CD8-positive, alpha-beta T cell (primary cell): ENCODE measurements at regions of chr6 and their contacts with region 1.

Region 1: DNA sequence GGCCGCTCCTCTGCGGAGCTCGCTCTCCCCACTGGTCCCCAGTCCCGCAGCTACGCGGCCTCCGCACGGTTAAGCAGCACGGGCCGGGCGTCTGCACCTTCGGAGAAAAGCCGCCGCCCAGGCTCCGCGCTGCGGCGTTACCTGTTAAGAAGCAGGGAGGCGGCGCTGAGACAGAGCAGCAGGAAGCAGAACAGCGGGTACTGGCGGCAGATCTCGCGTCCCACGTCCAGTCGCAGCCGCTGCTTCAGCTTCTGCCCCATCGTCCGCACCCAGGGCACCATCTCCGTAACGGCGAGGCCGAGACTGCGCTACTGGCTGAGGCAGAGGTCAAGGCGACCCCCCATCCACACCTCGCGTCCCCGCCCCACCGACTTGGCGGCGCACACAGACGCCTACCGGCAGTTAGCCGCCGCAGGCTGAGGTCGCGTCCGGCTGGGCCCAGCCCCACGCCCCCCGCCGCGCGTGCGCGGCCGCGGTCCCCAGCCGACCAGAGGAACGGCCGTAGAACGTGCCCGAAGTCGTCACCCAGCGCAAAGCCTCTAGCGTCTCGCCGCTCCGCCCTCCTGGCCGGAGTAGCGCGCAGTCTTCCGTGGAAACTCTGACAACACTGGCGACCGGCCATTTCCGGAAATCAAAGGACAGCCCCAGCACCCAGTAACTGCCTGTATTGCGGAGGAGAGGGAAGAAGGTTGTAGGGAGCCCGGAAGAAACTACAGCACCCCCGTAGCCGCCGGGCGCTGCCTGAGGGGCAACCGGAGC is at the start of gene SNX14:
- DNase-seq: peak; percentile 59 to 90 (median 76)
- ATAC-seq: peak; percentile 78
- H3K4me3 ChIP-seq: peak within 1 kb of the TSS; percentile 90 to 95
- H3K4me3 Mint-ChIP-seq: peak within 1 kb of the TSS; percentile 97
- H3K27ac ChIP-seq: peak within 1 kb of the TSS; percentile 84 to 88
- H3K27ac Mint-ChIP-seq: peak within 1 kb of the TSS; percentile 98
- H3K4me1 ChIP-seq: peaks cover 20% of the 10 kb centered on the region
- H3K4me1 Mint-ChIP-seq: peaks cover 53% of the 10 kb centered on the region
- H3K27me3 ChIP-seq: no peaks in the 10 kb centered on the region
- H3K27me3 Mint-ChIP-seq: no peaks in the 10 kb centered on the region
- CTCF ChIP-seq: no peak
- total RNA-seq, gene SNX14: 34.2 to 38.1 TPM

Region 2: DNA sequence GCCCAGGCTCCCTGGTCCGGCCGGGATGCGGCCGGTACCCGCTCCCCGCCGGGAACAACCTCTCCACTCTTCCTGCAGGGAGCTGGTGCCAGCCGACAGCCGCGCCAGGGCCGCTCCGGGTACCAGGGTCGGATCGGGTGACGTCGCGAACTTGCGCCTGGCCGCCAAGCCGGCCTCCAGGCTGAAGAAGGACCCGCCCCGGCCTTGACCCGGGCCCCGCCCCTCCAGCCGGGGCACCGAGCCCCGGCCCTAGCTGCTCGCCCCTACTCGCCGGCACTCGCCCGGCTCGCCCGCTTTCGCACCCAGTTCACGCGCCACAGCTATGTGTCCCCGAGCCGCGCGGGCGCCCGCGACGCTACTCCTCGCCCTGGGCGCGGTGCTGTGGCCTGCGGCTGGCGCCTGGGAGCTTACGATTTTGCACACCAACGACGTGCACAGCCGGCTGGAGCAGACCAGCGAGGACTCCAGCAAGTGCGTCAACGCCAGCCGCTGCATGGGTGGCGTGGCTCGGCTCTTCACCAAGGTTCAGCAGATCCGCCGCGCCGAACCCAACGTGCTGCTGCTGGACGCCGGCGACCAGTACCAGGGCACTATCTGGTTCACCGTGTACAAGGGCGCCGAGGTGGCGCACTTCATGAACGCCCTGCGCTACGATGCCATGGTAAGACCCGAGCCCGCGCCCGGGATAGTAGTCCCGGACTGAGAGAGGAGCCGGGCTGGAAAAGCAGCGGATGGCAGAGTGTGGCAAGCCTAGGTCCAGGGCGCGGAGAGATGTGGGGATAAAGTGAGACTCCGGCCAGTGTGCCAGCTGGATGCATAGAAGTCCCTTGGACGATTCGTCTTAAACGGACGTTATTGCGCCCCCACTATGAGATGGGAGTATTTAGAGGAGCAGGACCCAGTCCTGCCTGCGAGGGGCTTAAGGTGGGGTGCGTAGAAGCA is 143.5 kb before region 1 on chr6 and contains the start of gene NT5E:
- CTCF ChIA-PET with region 1: no interaction called
- POLR2A ChIA-PET with region 1: interaction called, 16 read pairs
- intact Hi-C with region 1: no loop called
- DNase-seq: peak; percentile 19 to 78 (median 61)
- ATAC-seq: peak; percentile 58
- H3K4me3 ChIP-seq: peak within 1 kb of the TSS; percentile 64 to 65
- H3K4me3 Mint-ChIP-seq: peak within 1 kb of the TSS; percentile 98
- H3K27ac ChIP-seq: peak within 1 kb of the TSS; percentile 40 to 71
- H3K27ac Mint-ChIP-seq: peak within 1 kb of the TSS; percentile 97
- H3K4me1 ChIP-seq: peaks cover 44% of the 10 kb centered on the region
- H3K4me1 Mint-ChIP-seq: peaks cover 62% of the 10 kb centered on the region
- H3K27me3 ChIP-seq: peaks cover 0 to 6% of the 10 kb centered on the region in 2 experiments
- H3K27me3 Mint-ChIP-seq: no peaks in the 10 kb centered on the region
- CTCF ChIP-seq: no peak
- total RNA-seq, gene NT5E: 12.7 to 13.0 TPM

Region 3: DNA sequence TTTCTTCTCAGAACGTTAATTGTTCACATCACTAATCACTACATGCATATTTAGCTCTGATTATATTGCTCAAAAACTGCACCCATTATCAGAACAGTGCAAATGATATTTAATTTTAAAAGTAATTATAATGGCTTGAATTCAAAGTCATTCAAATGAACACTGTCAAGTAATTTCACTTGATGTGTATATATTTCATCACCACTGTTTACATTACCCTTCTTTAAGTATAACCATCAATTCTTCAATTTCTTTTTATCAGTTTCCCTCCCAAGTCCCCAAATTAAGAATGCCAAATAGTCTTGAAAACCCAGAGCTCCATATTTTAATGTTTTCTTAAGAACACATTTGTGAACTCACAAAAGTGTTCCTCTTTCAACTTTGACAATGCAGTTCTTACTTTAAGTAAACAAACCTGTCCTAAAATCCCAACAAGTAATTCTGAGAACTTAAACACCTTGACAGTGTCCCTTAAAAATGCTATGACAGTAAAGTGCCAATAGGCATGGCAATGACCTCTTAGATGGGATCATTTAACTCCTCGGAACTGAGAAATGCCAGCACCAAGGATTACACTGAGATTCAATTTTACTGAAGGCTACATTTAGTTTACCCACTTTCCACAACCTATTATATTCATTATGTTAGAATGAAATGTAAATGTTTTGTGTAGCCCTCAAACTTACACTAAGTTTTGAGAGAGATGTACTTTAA is 16.7 kb after region 1 on chr6:
- CTCF ChIA-PET with region 1: interaction called, 3 read pairs
- POLR2A ChIA-PET with region 1: interaction called, 4 read pairs
- intact Hi-C with region 1: loop called in 1 of 2 experiments (anchors 1 kb)
- DNase-seq: no peak
- ATAC-seq: no peak
- H3K4me3 ChIP-seq: no peak overlapping the region
- H3K4me3 Mint-ChIP-seq: no peak overlapping the region
- H3K27ac ChIP-seq: no peak overlapping the region
- H3K27ac Mint-ChIP-seq: no peak overlapping the region
- H3K4me1 ChIP-seq: peaks cover 4% of the 10 kb centered on the region
- H3K4me1 Mint-ChIP-seq: peaks cover 4% of the 10 kb centered on the region
- H3K27me3 ChIP-seq: no peaks in the 10 kb centered on the region
- H3K27me3 Mint-ChIP-seq: no peaks in the 10 kb centered on the region
- CTCF ChIP-seq: no peak

Region 4: GRCh38 chr6:85669735-85670194 is 76.1 kb after region 1 on chr6:
- CTCF ChIA-PET with region 1: interaction called, 3 read pairs
- POLR2A ChIA-PET with region 1: interaction called, 9 read pairs
- intact Hi-C with region 1: loop called in 1 of 2 experiments (anchors 2 kb)
- DNase-seq: peak; percentile 2 to 83 (median 35)
- ATAC-seq: peak; percentile 92
- H3K4me3 ChIP-seq: no peak overlapping the region
- H3K4me3 Mint-ChIP-seq: peak overlapping the region; percentile 57
- H3K27ac ChIP-seq: peak overlapping the region in 1 of 2 experiments; percentile 77
- H3K27ac Mint-ChIP-seq: peak overlapping the region; percentile 93
- H3K4me1 ChIP-seq: peaks cover 35% of the 10 kb centered on the region
- H3K4me1 Mint-ChIP-seq: peaks cover 58% of the 10 kb centered on the region
- H3K27me3 ChIP-seq: no peaks in the 10 kb centered on the region
- H3K27me3 Mint-ChIP-seq: no peaks in the 10 kb centered on the region
- CTCF ChIP-seq: no peak

Region 5: GRCh38 chr6:85714893-85715530 is 121.4 kb after region 1 on chr6:
- CTCF ChIA-PET with region 1: no interaction called
- POLR2A ChIA-PET with region 1: no interaction called
- intact Hi-C with region 1: no loop called
- DNase-seq: no peak
- ATAC-seq: no peak
- H3K4me3 ChIP-seq: no peak overlapping the region
- H3K4me3 Mint-ChIP-seq: no peak overlapping the region
- H3K27ac ChIP-seq: no peak overlapping the region
- H3K27ac Mint-ChIP-seq: no peak overlapping the region
- H3K4me1 ChIP-seq: no peaks in the 10 kb centered on the region
- H3K4me1 Mint-ChIP-seq: no peaks in the 10 kb centered on the region
- H3K27me3 ChIP-seq: no peaks in the 10 kb centered on the region
- H3K27me3 Mint-ChIP-seq: peaks cover 13% of the 10 kb centered on the region
- CTCF ChIP-seq: no peak